ENCODE measurements at regions of chr20 and their contacts with region 1.

Region 1: DNA sequence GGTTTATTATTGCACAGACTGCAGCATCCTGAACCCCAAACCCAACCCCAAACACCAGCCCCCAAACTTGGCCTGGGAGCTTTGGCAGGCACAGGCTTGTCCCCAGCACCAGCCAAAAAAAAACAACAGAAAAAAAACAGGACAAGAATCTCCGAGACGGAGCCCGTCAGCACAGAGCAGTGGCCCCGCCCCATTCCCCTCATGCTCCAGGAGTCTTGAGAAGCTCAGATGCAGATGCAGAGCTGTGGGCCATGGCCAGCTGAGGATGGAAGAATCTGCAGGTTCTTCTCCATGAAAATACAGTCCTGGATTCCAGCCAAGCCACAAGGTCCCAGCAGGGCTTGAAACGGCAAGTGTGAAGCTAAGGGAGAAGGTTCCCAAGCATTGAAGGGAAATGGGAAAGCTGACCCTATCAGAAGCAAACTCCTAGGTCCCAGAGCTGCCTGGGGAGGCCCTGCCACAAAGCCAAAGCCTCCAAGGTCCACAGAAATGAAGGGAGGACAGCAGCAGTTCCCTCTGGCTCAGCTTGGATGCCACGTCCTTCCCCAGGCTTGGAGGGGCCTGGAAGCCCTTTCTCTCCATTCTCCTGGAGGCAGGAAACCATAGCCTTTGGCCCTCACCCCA is 75.2 kb downstream of the JPH2 start:
- DNase-seq: peak in 2 of 3 donors; percentile 54 to 69
- ATAC-seq: no peak
- H3K4me3 ChIP-seq: no peak overlapping the region
- H3K27ac ChIP-seq: no peak overlapping the region
- H3K4me1 ChIP-seq: no peaks in the 10 kb centered on the region
- H3K27me3 ChIP-seq: no peaks in the 10 kb centered on the region

Region 2: DNA sequence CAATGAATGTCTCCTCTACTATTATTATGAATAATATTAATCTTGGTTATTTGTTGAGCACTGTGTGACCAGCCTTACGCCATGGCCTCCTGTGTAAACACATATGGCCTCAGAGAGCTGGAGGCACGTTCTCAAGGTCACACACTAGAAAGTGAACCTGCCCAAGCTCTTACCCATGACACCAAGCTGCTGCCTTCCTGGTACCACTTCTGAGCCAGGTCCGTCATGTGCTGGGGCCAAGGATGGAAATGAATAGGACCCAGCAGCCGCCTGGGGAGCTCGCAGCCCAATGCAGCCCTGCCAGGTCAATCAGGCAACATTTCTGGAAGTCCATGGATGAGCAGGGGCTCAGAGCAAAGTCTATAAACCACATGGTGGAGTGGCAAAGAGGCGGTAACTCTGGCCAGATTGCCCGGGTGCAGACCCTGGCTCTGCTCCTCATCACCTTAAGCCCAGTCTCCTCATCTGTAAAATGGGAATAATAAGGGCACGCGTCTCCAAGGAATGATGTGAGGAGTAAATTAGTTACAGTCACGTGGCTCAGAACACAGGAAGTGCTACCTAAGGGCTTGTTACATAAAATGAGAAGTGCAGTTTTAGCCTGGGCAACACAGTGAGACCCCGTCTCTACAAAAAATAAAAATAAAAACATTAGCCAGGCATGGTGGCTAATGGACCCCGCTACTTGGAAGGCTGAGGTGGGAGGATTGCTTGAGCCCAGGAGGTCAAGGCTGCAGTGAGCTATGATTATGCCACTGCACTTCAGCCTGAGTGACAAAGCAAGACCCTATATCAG is 13.7 kb after region 1 on chr20:
- intact Hi-C with region 1: loop called in 1 of 4 experiments (anchors 1 kb)
- DNase-seq: no peak
- ATAC-seq: no peak
- H3K4me3 ChIP-seq: no peak overlapping the region
- H3K27ac ChIP-seq: no peak overlapping the region
- H3K4me1 ChIP-seq: peaks cover 5% of the 10 kb centered on the region
- H3K27me3 ChIP-seq: no peaks in the 10 kb centered on the region

Region 3: GRCh38 chr20:44187051-44187762 is 75.4 kb after region 1 on chr20 and contains the start of gene JPH2:
- intact Hi-C with region 1: loop called in 3 of 4 experiments (anchors 2 to 5 kb)
- DNase-seq: peak; percentile 58 to 83 (median 80)
- ATAC-seq: peak; percentile 83 to 87
- H3K4me3 ChIP-seq: peak within 1 kb of the TSS; percentile 60
- H3K27ac ChIP-seq: peak within 1 kb of the TSS; percentile 98
- H3K4me1 ChIP-seq: peaks cover 3% of the 10 kb centered on the region
- H3K27me3 ChIP-seq: no peaks in the 10 kb centered on the region
- total RNA-seq, gene JPH2: 99.0 to 117 (median 107) TPM

Region 4: DNA sequence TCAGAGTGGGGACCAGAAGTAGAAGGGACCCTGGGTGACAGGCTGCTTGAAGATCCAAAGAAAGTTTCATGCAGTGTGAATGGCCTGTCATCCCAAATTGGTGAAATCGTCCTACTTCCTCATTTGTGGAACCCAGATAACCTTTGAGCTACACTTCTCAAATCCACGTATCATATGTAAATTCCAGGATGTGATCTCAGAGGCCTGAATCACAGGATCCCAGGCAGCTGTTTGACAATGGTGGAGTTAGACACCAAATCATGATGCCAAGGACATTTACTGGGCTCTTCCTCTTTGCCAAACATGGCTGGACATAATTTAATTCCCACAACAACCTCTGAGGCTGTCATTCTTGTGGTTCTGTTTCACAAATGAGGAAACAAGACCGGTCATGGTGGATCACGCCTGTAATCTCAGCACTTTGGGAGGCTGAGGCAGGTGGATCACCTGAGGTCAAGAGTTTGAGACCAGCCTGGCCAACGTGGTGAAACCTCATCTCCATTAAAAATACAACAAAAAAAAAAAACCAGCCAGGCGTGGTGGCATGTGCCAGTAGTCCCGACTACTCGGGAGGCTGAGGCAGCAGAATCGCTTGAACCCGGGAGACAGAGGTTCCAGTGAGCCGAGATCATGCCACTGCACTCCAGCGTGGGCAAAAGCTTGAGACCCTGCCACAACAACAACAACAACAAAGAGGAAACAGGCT is 324.0 kb after region 1 on chr20:
- intact Hi-C with region 1: no loop called
- DNase-seq: no peak
- ATAC-seq: no peak
- H3K4me3 ChIP-seq: no peak overlapping the region
- H3K27ac ChIP-seq: no peak overlapping the region
- H3K4me1 ChIP-seq: no peaks in the 10 kb centered on the region
- H3K27me3 ChIP-seq: no peaks in the 10 kb centered on the region